ENCODE measurements at regions of chr10 and their contacts with region 1.

Region 1: GRCh38 chr10:95423164-95424005 is 132.6 kb upstream of the PDLIM1 start:
- DNase-seq: no peak
- ATAC-seq: no peak
- H3K4me3 ChIP-seq: no peak overlapping the region
- H3K27ac ChIP-seq: no peak overlapping the region
- H3K4me1 ChIP-seq: no peaks in the 10 kb centered on the region
- H3K27me3 ChIP-seq: no peaks in the 10 kb centered on the region
- CTCF ChIP-seq: no peak
- POLR2A ChIP-seq: no peak

Region 2: GRCh38 chr10:95572131-95572820 is 148.9 kb after region 1 on chr10:
- intact Hi-C with region 1: loop called in 1 of 2 experiments (anchors 10 kb)
- DNase-seq: no peak
- ATAC-seq: no peak
- H3K4me3 ChIP-seq: no peak overlapping the region
- H3K27ac ChIP-seq: no peak overlapping the region
- H3K4me1 ChIP-seq: no peaks in the 10 kb centered on the region
- H3K27me3 ChIP-seq: no peaks in the 10 kb centered on the region
- CTCF ChIP-seq: no peak
- POLR2A ChIP-seq: no peak

Measured in right lobe of liver (tissue), 6 donors.